ENCODE measurements at regions of chr6 and their contacts with region 1.

Region 1: DNA sequence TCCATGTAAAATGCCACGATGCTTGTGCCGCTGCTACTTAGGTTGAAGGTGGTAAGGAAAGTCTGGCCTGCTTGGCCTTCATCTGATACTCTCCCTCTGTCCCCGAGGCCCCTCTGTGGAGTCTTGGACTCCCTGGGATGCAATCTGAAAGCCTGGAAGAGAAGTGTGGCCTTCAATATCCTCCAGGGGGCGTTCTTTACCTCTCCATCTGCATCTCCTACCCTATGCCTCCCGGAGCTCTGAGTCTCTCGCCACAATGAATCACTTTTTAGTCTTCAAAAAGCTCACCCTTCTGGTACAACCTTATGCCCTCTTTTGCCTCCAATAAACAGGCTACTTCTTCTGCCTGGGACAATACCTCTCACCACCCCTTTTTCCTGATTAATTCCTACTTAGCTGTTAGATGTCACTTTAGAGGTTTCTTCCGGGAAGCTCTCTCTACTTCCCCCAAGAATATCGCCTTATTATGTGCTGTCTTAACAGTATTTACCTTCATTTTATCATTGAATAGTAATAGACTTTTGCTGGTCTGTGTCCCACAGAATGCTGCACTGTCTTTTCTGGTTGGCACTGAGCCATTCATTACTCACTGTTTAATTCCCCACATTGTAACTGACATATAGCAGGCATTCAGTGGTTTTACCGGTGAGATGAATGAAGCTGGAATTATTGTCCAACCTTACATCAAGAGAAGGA is 13.9 kb upstream of the ATG5 start:
- DNase-seq: no peak
- H3K4me3 ChIP-seq: no peak overlapping the region
- H3K27ac ChIP-seq: no peak overlapping the region
- H3K4me1 ChIP-seq: peaks cover 0 to 9% (median 3%) of the 10 kb centered on the region in 6 donors
- H3K27me3 ChIP-seq: peaks cover 0 to 13% (median 0%) of the 10 kb centered on the region in 7 donors
- CTCF ChIP-seq: peak in 10 of 11 experiments; percentile 4 to 78 (median 62)
- POLR2A ChIP-seq: no peak

Region 2: DNA sequence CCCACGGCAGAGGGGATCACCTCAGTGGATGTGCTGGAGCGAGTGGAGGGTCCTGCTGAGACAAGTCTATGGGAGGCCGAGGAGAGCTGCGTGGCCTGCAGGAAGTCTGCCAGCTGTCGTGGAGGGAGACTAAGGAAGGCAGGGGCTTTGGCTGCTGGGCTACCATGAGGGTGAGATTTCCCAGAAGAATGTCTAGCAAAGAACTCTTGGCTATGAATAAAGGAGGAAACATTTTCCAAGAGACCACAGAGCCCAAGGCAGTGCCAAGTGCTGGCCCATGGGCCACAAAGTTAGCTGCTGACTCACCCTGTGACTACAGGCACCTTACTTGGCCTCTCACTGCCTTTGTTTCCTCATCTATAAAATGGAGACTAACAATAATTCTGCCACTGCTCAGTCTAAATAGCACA is 179.9 kb before region 1 on chr6:
- intact Hi-C with region 1: no loop called
- DNase-seq: no peak
- H3K4me3 ChIP-seq: no peak overlapping the region
- H3K27ac ChIP-seq: no peak overlapping the region
- H3K4me1 ChIP-seq: peaks cover 15 to 23% (median 20%) of the 10 kb centered on the region in 6 donors
- H3K27me3 ChIP-seq: no peaks in the 10 kb centered on the region
- CTCF ChIP-seq: no peak
- POLR2A ChIP-seq: no peak

Region 3: DNA sequence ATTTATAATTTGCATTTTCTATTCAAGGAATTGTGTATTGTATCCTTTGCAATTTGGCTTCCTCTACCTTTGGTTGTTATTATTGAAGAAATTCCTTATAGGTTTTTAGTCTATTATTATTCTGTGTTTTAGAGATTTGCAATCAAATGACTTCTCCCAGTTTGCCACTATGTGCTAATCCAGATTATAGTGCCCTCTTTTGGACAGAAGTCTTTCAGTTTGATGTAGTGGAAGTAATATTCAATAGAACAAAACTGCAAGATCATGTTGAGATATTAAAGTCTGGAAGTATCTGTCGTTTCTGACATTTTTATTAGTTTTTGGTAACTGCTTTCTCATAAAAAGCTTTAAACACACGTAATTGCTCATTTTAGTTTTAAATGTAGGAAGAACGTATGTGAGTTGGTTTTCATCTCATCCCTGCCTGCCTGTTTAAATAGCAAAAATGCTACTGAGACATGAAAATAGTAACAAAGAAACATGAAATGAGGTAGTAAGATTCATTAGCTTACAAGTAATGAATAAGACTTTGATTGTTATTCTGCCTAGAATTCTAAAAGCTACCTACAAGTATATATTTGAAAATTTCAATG is 217.0 kb after region 1 on chr6:
- intact Hi-C with region 1: loop called (anchors 10 kb)
- DNase-seq: no peak
- H3K4me3 ChIP-seq: no peak overlapping the region
- H3K27ac ChIP-seq: no peak overlapping the region
- H3K4me1 ChIP-seq: peaks cover 0 to 28% (median 0%) of the 10 kb centered on the region in 6 donors
- H3K27me3 ChIP-seq: no peaks in the 10 kb centered on the region
- CTCF ChIP-seq: peak in 8 of 11 experiments; percentile 30 to 60 (median 44)
- POLR2A ChIP-seq: no peak